ENCODE measurements at regions of chr17 and their contacts with region 1.

Region 1: GRCh38 chr17:64420143-64420971 is 28.6 kb upstream of the MILR1 start:
- DNase-seq: peak; percentile 68
- H3K4me3 ChIP-seq: no peak overlapping the region
- H3K27ac ChIP-seq: no peak overlapping the region
- H3K4me1 ChIP-seq: no peaks in the 10 kb centered on the region
- H3K27me3 ChIP-seq: no peaks in the 10 kb centered on the region
- CTCF ChIP-seq: peak; percentile 73 to 75

Region 2: GRCh38 chr17:64145757-64146417 is 274.5 kb before region 1 on chr17:
- CTCF ChIA-PET with region 1: interaction called, 16 read pairs
- dilution Hi-C with region 1: no loop called
- in situ Hi-C with region 1: no loop called
- intact Hi-C with region 1: loop called (anchors 5 kb)
- DNase-seq: peak; percentile 98
- H3K4me3 ChIP-seq: peak overlapping the region; percentile 76 to 89 (median 79)
- H3K27ac ChIP-seq: peak overlapping the region; percentile 76
- H3K4me1 ChIP-seq: peaks cover 8% of the 10 kb centered on the region
- H3K27me3 ChIP-seq: no peaks in the 10 kb centered on the region
- CTCF ChIP-seq: no peak

Region 3: GRCh38 chr17:64320613-64321553 is 99.5 kb before region 1 on chr17:
- CTCF ChIA-PET with region 1: interaction called, 4 read pairs
- dilution Hi-C with region 1: loop called (anchors 5 kb)
- in situ Hi-C with region 1: loop called (anchors 5 kb)
- intact Hi-C with region 1: loop called (anchors 1 kb)
- DNase-seq: peak; percentile 62
- H3K4me3 ChIP-seq: no peak overlapping the region
- H3K27ac ChIP-seq: no peak overlapping the region
- H3K4me1 ChIP-seq: no peaks in the 10 kb centered on the region
- H3K27me3 ChIP-seq: no peaks in the 10 kb centered on the region
- CTCF ChIP-seq: peak; percentile 74 to 80

Region 4: GRCh38 chr17:64336760-64337455 is 83.4 kb before region 1 on chr17:
- CTCF ChIA-PET with region 1: no interaction called
- dilution Hi-C with region 1: no loop called
- in situ Hi-C with region 1: no loop called
- intact Hi-C with region 1: no loop called
- DNase-seq: no peak
- H3K4me3 ChIP-seq: no peak overlapping the region
- H3K27ac ChIP-seq: no peak overlapping the region
- H3K4me1 ChIP-seq: peaks cover 11% of the 10 kb centered on the region
- H3K27me3 ChIP-seq: peaks cover 3% of the 10 kb centered on the region
- CTCF ChIP-seq: no peak

Region 5: DNA sequence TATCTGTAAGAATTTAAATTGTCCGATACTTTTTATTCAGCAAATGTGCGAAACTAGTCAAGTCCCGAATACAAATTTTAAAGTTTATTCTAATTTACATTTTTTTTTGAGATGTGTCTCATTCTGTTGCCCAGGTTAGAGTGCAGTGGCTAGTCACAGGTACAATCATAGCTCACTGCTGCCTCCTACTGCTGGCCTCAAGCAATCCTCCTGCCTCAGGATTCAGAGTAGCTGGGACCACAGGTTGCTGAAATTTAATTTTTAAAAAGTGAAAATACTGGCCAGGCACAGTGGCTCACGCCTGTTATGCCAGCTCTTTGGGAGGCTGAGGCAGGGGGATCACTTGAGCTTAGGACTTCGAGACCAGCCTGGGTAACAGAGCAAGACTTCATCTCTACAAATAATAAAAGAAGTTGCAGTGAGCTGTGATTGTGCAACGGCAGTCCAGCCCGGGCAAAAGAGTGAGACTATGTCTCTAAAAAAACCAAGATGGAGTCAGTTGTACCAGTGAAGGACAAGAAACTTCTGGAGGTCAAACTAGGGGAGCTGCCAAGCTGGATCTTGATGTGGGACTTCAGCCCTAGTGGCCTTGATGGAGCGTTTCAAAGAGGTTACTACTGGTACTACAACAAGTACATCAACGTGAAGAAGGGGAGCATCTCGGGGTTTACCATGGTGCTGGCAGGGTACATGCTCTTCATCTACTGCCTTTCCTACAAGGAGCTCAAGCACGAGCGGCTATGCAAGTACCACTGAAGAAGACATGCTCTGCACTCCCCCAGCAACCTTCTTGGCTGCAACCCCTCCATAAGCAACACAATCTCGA is 70.9 kb after region 1 on chr17:
- CTCF ChIA-PET with region 1: interaction called, 7 read pairs
- dilution Hi-C with region 1: loop called (anchors 5 kb)
- in situ Hi-C with region 1: loop called in 1 of 2 experiments (anchors 5 kb)
- intact Hi-C with region 1: loop called (anchors 1 kb)
- DNase-seq: no peak
- H3K4me3 ChIP-seq: no peak overlapping the region
- H3K27ac ChIP-seq: no peak overlapping the region
- H3K4me1 ChIP-seq: peaks cover 11% of the 10 kb centered on the region
- H3K27me3 ChIP-seq: no peaks in the 10 kb centered on the region
- CTCF ChIP-seq: peak; percentile 60 to 70

Region 6: GRCh38 chr17:64506576-64507477 is 86.5 kb after region 1 on chr17 and contains the start of gene CEP95:
- CTCF ChIA-PET with region 1: interaction called, 3 read pairs
- dilution Hi-C with region 1: no loop called
- in situ Hi-C with region 1: no loop called
- intact Hi-C with region 1: loop called (anchors 1 kb)
- DNase-seq: peak; percentile 99
- H3K4me3 ChIP-seq: peak within 1 kb of the TSS; percentile 82 to 100 (median 97)
- H3K27ac ChIP-seq: peak within 1 kb of the TSS; percentile 99
- H3K4me1 ChIP-seq: peaks cover 37% of the 10 kb centered on the region
- H3K27me3 ChIP-seq: no peaks in the 10 kb centered on the region
- CTCF ChIP-seq: no peak
- total RNA-seq, gene CEP95: 18.7 to 36.5 TPM

Region 7: DNA sequence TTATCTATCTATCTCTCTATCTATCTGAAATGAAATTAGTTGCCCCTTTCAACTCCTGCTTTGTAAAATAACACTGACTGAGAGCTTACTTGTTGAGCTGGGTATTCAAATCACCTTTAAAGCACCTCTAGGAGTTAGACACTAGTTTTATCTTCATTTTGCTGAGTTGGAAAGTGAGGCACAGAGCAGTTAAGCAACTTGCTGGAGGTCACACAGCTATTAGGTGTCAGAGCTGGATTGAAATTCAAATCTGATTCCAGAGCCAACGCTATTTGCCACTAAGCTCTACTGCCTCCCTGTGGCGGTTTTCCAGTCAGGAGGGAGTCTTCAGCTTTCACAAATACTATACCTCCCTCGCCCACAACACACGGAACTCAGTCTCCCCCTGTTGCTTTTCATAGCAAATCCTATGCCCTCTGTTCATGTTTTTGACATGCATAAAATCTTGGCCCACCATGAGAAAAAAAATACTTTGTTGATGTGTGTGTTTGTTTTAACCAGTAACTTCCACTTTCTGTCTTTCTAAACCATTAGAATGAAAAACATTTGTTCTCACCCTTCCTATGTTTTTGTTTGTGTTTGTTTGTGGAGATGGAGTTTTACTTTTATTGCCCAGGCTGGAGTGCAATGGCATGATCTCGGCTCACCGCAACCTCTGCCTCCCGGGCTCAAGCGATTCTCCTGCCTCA is 316.6 kb after region 1 on chr17:
- CTCF ChIA-PET with region 1: no interaction called
- dilution Hi-C with region 1: no loop called
- in situ Hi-C with region 1: no loop called
- intact Hi-C with region 1: loop called (anchors 5 kb)
- DNase-seq: peak; percentile 46
- H3K4me3 ChIP-seq: no peak overlapping the region
- H3K27ac ChIP-seq: no peak overlapping the region
- H3K4me1 ChIP-seq: peaks cover 2% of the 10 kb centered on the region
- H3K27me3 ChIP-seq: no peaks in the 10 kb centered on the region
- CTCF ChIP-seq: peak; percentile 46 to 60